Naive thymus-derived CD4-positive, alpha-beta T cell (primary cell): ENCODE measurements at regions of chr10 and their contacts with region 1.

Region 1: DNA sequence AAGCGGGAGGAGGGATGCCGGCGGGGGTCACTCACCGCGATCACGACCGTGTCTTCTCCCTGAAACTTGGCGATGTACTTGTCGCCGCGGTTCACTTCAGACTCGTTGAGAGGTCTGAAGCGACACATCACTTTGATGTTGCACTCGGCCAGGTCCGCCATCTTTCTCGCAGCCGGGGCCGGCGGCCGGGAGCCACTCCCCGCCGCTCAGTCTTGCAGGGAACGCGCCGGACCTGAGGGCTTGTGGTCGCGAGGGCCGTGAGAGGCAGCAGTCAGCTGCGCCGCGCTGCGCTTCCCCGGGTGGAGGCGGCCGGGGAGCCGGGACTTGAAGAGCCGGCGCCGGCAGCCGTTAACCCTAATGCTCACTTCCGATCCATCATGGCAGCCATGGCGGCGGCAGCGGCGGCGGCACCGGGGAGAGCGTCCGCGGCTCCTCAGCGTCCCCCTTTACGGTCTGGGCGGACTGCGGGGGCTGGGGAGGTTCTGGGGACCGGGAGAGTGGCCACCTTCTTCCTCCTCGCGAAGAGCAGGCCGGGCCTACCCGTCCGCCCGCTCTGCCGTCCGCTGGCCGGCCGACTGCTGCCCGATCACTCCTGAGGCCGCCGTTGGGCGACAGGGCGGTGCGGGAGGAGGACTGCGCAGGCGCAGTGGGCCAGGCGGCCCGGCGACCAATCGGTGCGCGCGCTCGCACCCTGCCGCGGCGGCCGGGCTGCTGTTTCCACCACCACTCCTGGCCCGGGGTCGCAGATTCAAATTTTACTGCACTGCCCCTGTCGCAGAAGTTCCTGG is at the start of gene KIF5B:
- DNase-seq: peak; percentile 77 to 95 (median 90)
- ATAC-seq: peak; percentile 87
- H3K4me3 ChIP-seq: peak within 1 kb of the TSS; percentile 71
- H3K4me3 Mint-ChIP-seq: peak within 1 kb of the TSS; percentile 94 to 99 (median 96)
- H3K27ac ChIP-seq: peak within 1 kb of the TSS; percentile 83
- H3K27ac Mint-ChIP-seq: peak within 1 kb of the TSS; percentile 90 to 97 (median 93)
- H3K4me1 ChIP-seq: peaks cover 30 to 34% of the 10 kb centered on the region in 2 donors
- H3K4me1 Mint-ChIP-seq: peaks cover 33 to 55% (median 47%) of the 10 kb centered on the region in 7 donors
- H3K27me3 ChIP-seq: no peaks in the 10 kb centered on the region
- H3K27me3 Mint-ChIP-seq: no peaks in the 10 kb centered on the region
- total RNA-seq, gene KIF5B: 42.2 to 66.0 (median 46.3) TPM

Region 2: DNA sequence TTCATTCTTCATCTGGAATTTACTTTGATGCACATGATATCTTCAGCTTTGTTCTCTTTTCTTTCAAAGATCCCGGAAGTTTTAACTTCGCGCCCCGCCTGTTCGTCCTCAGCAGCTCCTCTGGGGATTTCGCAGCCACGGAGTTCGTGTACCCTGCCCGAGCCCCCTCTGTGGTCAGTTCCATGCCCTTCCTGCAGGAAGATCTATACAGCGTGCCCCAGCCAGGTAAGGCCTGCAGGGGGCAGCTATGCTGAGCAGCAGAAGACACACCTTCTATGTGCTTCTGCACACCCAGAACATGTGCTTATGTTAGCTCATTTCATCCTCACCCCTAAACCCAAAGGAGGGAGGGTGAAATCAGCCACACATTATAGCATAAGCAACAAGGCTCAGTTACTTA is 1346.8 kb before region 1 on chr10:
- CTCF ChIA-PET with region 1: no interaction called
- POLR2A ChIA-PET with region 1: no interaction called
- intact Hi-C with region 1: loop called in 1 of 2 experiments (anchors 10 kb)
- DNase-seq: no peak
- ATAC-seq: no peak
- H3K4me3 ChIP-seq: no peak overlapping the region
- H3K4me3 Mint-ChIP-seq: no peak overlapping the region
- H3K27ac ChIP-seq: no peak overlapping the region
- H3K27ac Mint-ChIP-seq: peak overlapping the region in 5 of 9 donors; percentile 3 to 73 (median 55)
- H3K4me1 ChIP-seq: peaks cover 13 to 17% of the 10 kb centered on the region in 2 donors
- H3K4me1 Mint-ChIP-seq: peaks cover 12 to 31% (median 25%) of the 10 kb centered on the region in 7 donors
- H3K27me3 ChIP-seq: no peaks in the 10 kb centered on the region
- H3K27me3 Mint-ChIP-seq: no peaks in the 10 kb centered on the region

Region 3: DNA sequence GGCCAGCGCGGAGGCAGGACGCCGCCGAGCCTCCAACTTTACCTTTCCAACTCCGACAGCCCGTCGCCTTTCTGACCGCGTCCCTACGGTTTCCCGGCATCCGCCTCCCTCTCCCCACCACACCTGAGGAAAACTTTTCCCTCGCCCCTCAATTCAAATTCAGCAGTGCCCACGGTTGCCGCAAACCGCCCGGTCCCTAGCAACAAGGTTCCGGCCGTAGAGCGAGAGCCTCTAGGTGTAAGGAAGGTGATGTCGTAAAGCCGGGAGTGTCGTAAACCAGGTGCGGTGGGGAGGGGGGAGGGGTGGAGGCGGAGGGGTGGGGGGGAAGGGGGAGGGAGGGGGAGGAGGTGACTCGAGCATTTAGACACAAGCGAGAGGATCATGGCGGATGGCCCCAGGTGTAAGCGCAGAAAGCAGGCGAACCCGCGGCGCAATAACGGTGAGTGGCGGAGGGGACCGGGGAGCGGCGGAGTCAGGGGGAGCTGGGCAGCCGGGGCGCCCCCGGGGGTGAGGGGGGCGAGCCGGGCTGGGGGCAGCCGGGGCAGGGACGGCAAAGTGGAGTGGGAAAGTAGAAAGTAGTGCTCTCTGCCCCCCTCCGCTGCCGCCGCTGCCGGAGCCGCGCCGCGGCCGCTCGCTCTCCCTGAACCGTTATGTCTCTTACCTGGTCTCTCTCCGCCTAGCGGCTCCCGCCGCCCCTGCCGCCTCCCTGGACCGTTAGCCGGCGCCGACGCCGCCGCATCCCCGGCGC is 737.0 kb before region 1 on chr10 and contains the start of gene ZEB1:
- CTCF ChIA-PET with region 1: no interaction called
- POLR2A ChIA-PET with region 1: no interaction called
- intact Hi-C with region 1: loop called (anchors 1 to 10 kb)
- DNase-seq: peak; percentile 64 to 96 (median 91)
- ATAC-seq: peak; percentile 79
- H3K4me3 ChIP-seq: peak within 1 kb of the TSS; percentile 89
- H3K4me3 Mint-ChIP-seq: peak within 1 kb of the TSS; percentile 91 to 100 (median 99)
- H3K27ac ChIP-seq: peak within 1 kb of the TSS; percentile 99
- H3K27ac Mint-ChIP-seq: peak within 1 kb of the TSS; percentile 96 to 100 (median 99)
- H3K4me1 ChIP-seq: peaks cover 11 to 27% of the 10 kb centered on the region in 2 donors
- H3K4me1 Mint-ChIP-seq: peaks cover 14 to 48% (median 41%) of the 10 kb centered on the region in 7 donors
- H3K27me3 ChIP-seq: no peaks in the 10 kb centered on the region
- H3K27me3 Mint-ChIP-seq: peaks cover 0 to 2% (median 0%) of the 10 kb centered on the region in 5 donors
- total RNA-seq, gene ZEB1: 65.5 to 126 (median 80.9) TPM

Region 4: GRCh38 chr10:32041290-32042028 is 14.5 kb before region 1 on chr10:
- CTCF ChIA-PET with region 1: no interaction called
- POLR2A ChIA-PET with region 1: interaction called, 4 read pairs
- intact Hi-C with region 1: loop called in 1 of 2 experiments (anchors 1 kb)
- DNase-seq: no peak
- ATAC-seq: no peak
- H3K4me3 ChIP-seq: no peak overlapping the region
- H3K4me3 Mint-ChIP-seq: peak overlapping the region in 4 of 10 donors; percentile 0 to 30 (median 24)
- H3K27ac ChIP-seq: no peak overlapping the region
- H3K27ac Mint-ChIP-seq: peak overlapping the region in 7 of 9 donors; percentile 13 to 85 (median 31)
- H3K4me1 ChIP-seq: peaks cover 16 to 20% of the 10 kb centered on the region in 2 donors
- H3K4me1 Mint-ChIP-seq: peaks cover 48 to 66% (median 66%) of the 10 kb centered on the region in 7 donors
- H3K27me3 ChIP-seq: no peaks in the 10 kb centered on the region
- H3K27me3 Mint-ChIP-seq: no peaks in the 10 kb centered on the region

Region 5: DNA sequence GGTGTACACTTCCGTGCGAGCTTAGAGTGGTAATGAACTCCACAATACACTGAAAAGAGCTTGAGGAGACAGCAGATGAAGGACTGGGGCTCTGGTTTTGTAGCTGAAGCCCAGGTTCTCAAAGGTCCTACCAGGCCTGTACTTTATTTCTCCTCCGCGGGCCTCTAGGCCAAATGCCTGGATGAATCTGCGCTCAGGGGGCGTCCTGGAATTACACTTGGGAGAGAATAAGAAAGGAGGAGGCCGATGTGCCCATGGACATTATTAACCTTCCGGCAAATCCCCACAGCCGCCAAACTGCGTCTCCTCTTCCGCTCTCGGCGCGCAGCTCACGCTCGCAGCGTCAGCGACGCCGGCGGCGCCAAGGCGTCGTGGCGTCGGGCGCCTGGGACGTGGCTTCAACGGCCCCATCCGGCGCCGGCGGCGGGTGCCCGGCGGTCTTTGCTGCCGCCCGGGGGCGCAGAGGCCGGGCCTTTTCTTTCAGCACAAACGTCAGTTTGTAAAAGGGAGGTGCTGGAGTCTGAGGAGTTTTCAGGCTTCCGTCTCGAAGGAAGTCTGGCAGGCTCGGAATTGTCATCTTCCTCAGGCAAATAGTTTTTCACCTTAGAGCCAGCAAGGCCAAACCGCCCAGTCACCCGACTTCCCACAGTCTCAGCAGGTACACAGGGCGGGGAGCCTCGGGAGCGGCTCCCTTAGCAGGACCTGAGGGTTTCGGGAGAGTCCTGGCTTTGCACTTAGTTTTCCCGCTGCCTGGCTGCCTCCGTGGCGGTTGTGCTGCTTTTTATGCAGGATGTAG is 389.9 kb after region 1 on chr10 and contains the start of gene CCDC7:
- CTCF ChIA-PET with region 1: no interaction called
- POLR2A ChIA-PET with region 1: no interaction called
- intact Hi-C with region 1: loop called in 1 of 2 experiments (anchors 5 kb)
- DNase-seq: peak; percentile 78 to 90 (median 88)
- ATAC-seq: peak; percentile 98
- H3K4me3 ChIP-seq: peak within 1 kb of the TSS; percentile 79
- H3K4me3 Mint-ChIP-seq: peak within 1 kb of the TSS; percentile 85 to 98 (median 94)
- H3K27ac ChIP-seq: peak within 1 kb of the TSS; percentile 95
- H3K27ac Mint-ChIP-seq: peak within 1 kb of the TSS; percentile 96 to 100 (median 99)
- H3K4me1 ChIP-seq: peaks cover 8 to 9% of the 10 kb centered on the region in 2 donors
- H3K4me1 Mint-ChIP-seq: peaks cover 2 to 35% (median 25%) of the 10 kb centered on the region in 7 donors
- H3K27me3 ChIP-seq: no peaks in the 10 kb centered on the region
- H3K27me3 Mint-ChIP-seq: peaks cover 0 to 4% (median 0%) of the 10 kb centered on the region in 5 donors
- total RNA-seq, gene CCDC7: 19.5 to 98.7 (median 69.5) TPM

Region 6: GRCh38 chr10:32501896-32502295 is 445.9 kb after region 1 on chr10:
- CTCF ChIA-PET with region 1: no interaction called
- POLR2A ChIA-PET with region 1: no interaction called
- intact Hi-C with region 1: no loop called
- DNase-seq: no peak
- ATAC-seq: no peak
- H3K4me3 ChIP-seq: no peak overlapping the region
- H3K4me3 Mint-ChIP-seq: no peak overlapping the region
- H3K27ac ChIP-seq: no peak overlapping the region
- H3K27ac Mint-ChIP-seq: no peak overlapping the region
- H3K4me1 ChIP-seq: no peaks in the 10 kb centered on the region
- H3K4me1 Mint-ChIP-seq: peaks cover 2 to 22% (median 17%) of the 10 kb centered on the region in 7 donors
- H3K27me3 ChIP-seq: no peaks in the 10 kb centered on the region
- H3K27me3 Mint-ChIP-seq: no peaks in the 10 kb centered on the region

Region 7: DNA sequence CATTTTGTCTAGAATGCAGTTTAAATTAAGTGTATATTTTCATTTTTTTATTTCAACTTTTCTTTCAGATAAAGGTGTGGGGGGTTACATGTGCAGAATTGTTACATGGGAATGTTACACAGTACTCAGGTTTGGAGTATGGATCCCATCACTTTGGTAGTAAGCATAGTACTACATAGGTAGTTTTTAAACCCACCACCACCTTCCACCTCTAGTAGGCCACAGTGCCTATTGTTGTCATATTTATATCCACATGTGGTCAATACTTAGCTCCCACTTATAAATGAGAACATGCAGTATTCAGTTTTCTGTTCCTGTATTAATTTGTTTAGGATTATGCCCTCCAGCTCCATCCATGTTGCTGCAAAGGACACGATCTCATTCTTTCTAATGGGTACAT is 590.5 kb after region 1 on chr10:
- CTCF ChIA-PET with region 1: no interaction called
- POLR2A ChIA-PET with region 1: no interaction called
- intact Hi-C with region 1: no loop called
- DNase-seq: no peak
- ATAC-seq: no peak
- H3K4me3 ChIP-seq: no peak overlapping the region
- H3K4me3 Mint-ChIP-seq: no peak overlapping the region
- H3K27ac ChIP-seq: no peak overlapping the region
- H3K27ac Mint-ChIP-seq: no peak overlapping the region
- H3K4me1 ChIP-seq: peaks cover 0 to 4% of the 10 kb centered on the region in 2 donors
- H3K4me1 Mint-ChIP-seq: peaks cover 4 to 13% (median 8%) of the 10 kb centered on the region in 7 donors
- H3K27me3 ChIP-seq: no peaks in the 10 kb centered on the region
- H3K27me3 Mint-ChIP-seq: no peaks in the 10 kb centered on the region